Activated CD4-positive, alpha-beta T cell treated with anti-CD3 and anti-CD28 coated beads, Interleukin-2, amount 10 ng/mL, durations not matched to agents 24 days and 14 days (primary cell): ENCODE measurements at regions of chr13 and their contacts with region 1.

Region 1: DNA sequence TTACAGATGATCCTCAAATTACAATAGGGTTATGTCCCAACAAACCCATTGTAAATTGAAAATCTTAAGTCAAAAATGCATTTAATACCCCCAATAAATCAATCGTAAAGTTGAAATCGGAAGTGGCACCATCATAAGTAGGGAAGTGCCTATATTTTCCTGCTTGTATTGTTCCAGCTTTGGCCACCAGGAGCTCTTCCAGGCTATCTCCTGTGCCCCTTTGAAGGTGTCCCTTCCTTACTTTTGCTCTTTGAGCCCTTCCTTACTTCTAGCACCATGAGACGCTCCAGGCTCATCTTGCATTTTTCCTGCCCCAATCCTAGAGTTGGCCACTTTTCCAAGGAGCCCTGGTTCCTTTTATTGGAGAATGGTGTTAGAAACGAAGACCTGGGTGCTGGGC is 163.0 kb upstream of the TSC22D1 start:
- DNase-seq: no peak
- H3K4me3 Mint-ChIP-seq: no peak overlapping the region
- H3K27ac Mint-ChIP-seq: no peak overlapping the region
- H3K4me1 Mint-ChIP-seq: no peaks in the 10 kb centered on the region
- H3K27me3 Mint-ChIP-seq: peaks cover 8% of the 10 kb centered on the region

Region 2: GRCh38 chr13:44529426-44529825 is 209.7 kb before region 1 on chr13:
- intact Hi-C with region 1: no loop called
- DNase-seq: no peak
- H3K4me3 Mint-ChIP-seq: no peak overlapping the region
- H3K27ac Mint-ChIP-seq: no peak overlapping the region
- H3K4me1 Mint-ChIP-seq: peaks cover 2% of the 10 kb centered on the region
- H3K27me3 Mint-ChIP-seq: peaks cover 14% of the 10 kb centered on the region

Region 3: GRCh38 chr13:44758630-44759383 is 19.7 kb after region 1 on chr13:
- intact Hi-C with region 1: loop called (anchors 2 kb)
- DNase-seq: peak; percentile 60
- H3K4me3 Mint-ChIP-seq: no peak overlapping the region
- H3K27ac Mint-ChIP-seq: peak overlapping the region; percentile 66
- H3K4me1 Mint-ChIP-seq: peaks cover 21% of the 10 kb centered on the region
- H3K27me3 Mint-ChIP-seq: no peaks in the 10 kb centered on the region